ENCODE measurements at regions of chr19 and their contacts with region 1.

Region 1: GRCh38 chr19:40221858-40222837 is 4.0 kb upstream of the TTC9B start:
- DNase-seq: no peak

Region 2: DNA sequence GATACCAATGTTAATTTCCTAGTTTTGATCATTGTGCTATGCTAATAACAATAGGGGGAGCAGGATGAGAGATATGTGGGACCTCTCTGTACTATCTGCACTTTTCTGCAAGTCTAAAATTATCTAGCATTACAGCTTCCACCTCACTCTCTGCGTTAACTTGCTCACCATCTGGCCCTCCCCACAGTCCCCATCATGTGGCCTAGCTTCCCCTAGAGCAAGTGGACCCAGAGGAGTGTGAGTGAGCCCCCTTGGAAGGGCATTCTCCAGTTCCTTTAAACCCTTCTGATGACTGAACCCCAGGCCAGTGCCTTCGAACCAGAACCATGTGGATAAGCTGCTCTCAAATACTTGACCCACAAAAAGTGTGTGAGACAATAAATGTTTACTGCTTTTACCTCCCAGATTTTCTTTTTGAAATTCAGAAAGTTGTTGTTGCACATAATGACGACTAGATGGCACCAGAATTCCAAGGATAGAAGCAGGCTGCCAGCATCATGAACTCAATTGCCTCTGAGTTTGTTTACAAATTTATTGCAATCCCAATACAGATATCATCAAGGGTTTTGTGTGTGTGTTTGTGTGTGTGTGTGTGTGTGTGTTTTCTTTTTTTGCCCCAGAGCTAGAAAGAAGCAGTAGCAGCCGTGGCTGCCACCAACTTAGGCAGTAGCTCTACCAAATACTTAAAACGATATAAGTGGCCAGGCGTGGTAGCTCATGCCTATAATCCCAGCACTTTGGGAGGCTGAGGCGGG is 82.4 kb before region 1 on chr19:
- intact Hi-C with region 1: loop called (anchors 2 to 5 kb)
- DNase-seq: no peak

Measured in posterior vena cava (tissue), 2 donors.